GM12878 (cell line): ENCODE measurements at regions of chr11 and their contacts with region 1.

Region 1: GRCh38 chr11:59429924-59430516 is 3.8 kb upstream of the OR5A2 start:
- DNase-seq: peak; percentile 61
- ATAC-seq: peak; percentile 94
- H3K4me3 ChIP-seq: no peak overlapping the region
- H3K27ac ChIP-seq: no peak overlapping the region
- H3K4me1 ChIP-seq: no peaks in the 10 kb centered on the region
- H3K27me3 ChIP-seq: peaks cover 0 to 4% of the 10 kb centered on the region in 2 experiments; a peak in 1 of 4 replicates
- CTCF ChIP-seq: peak; percentile 70 to 82 (median 78)
- EP300 ChIP-seq: no peak
- POLR2A ChIP-seq: no peak
- RAD21 ChIP-seq: peak; percentile 92

Region 2: DNA sequence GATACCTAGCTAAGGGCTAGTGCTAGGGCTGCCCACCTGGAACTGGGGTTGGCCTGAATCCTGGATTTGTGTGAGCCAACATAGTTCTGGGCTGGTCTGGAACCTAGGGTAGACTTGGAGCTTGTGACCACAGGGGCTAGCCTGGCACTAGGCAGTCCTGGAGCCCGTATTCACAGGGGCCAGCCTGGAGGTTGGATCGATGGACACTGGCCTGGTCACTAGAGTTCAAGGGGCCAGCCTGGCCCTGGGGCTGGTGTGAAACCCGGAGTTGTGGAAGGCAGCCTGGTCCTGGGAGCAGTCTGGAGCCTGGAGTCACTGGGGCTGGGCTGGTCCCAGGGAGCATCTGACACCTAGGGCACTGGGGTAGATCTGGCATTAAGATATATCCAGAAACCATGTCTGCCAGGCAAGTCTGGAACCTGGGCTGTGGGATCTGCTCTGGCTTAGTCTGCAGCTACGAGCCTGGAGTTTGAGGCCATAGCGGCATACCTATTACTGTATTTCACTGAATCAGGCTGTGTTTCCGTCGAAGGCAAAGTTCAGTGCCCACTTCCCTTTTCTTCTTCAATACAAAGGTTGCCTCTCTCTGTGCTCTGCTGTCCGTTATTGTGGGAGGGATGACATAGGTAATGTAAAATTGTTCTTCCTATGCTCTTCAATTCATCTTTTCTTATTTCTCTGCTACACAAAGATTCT is 353.0 kb before region 1 on chr11:
- CTCF ChIA-PET with region 1: no interaction called
- POLR2A ChIA-PET with region 1: no interaction called
- RAD21 ChIA-PET with region 1: no interaction called
- SMC1A ChIA-PET with region 1: no interaction called
- in situ Hi-C with region 1: no loop called
- intact Hi-C with region 1: no loop called
- DNase-seq: no peak
- ATAC-seq: peak; percentile 97
- H3K4me3 ChIP-seq: no peak overlapping the region
- H3K27ac ChIP-seq: no peak overlapping the region
- H3K4me1 ChIP-seq: peaks cover 27% of the 10 kb centered on the region
- H3K27me3 ChIP-seq: no peaks in the 10 kb centered on the region
- CTCF ChIP-seq: no peak
- EP300 ChIP-seq: no peak
- POLR2A ChIP-seq: no peak
- RAD21 ChIP-seq: no peak

Region 3: GRCh38 chr11:59197991-59198390 is 232.0 kb before region 1 on chr11:
- CTCF ChIA-PET with region 1: interaction called, 6 read pairs
- POLR2A ChIA-PET with region 1: no interaction called
- RAD21 ChIA-PET with region 1: interaction called, 3 read pairs
- SMC1A ChIA-PET with region 1: interaction called, 3 read pairs
- in situ Hi-C with region 1: no loop called
- intact Hi-C with region 1: loop called (anchors 2 kb)
- DNase-seq: no peak
- ATAC-seq: no peak
- H3K4me3 ChIP-seq: no peak overlapping the region
- H3K27ac ChIP-seq: peak overlapping the region; percentile 94
- H3K4me1 ChIP-seq: peaks cover 35% of the 10 kb centered on the region
- H3K27me3 ChIP-seq: no peaks in the 10 kb centered on the region
- CTCF ChIP-seq: no peak
- EP300 ChIP-seq: no peak
- POLR2A ChIP-seq: no peak
- RAD21 ChIP-seq: no peak

Region 4: GRCh38 chr11:59207988-59208451 is 222.0 kb before region 1 on chr11:
- CTCF ChIA-PET with region 1: interaction called, 11 read pairs
- POLR2A ChIA-PET with region 1: no interaction called
- RAD21 ChIA-PET with region 1: no interaction called
- SMC1A ChIA-PET with region 1: interaction called, 16 read pairs
- in situ Hi-C with region 1: no loop called
- intact Hi-C with region 1: loop called (anchors 2 kb)
- DNase-seq: peak; percentile 89
- ATAC-seq: peak; percentile 77
- H3K4me3 ChIP-seq: peak overlapping the region; percentile 64
- H3K27ac ChIP-seq: peak overlapping the region; percentile 76
- H3K4me1 ChIP-seq: peaks cover 51% of the 10 kb centered on the region
- H3K27me3 ChIP-seq: no peaks in the 10 kb centered on the region
- CTCF ChIP-seq: peak; percentile 74 to 87 (median 78); a peak in 5 of 6 replicates
- EP300 ChIP-seq: peak; percentile 62 to 68; a peak in 3 of 4 replicates
- POLR2A ChIP-seq: no peak
- RAD21 ChIP-seq: peak; percentile 77

Region 5: DNA sequence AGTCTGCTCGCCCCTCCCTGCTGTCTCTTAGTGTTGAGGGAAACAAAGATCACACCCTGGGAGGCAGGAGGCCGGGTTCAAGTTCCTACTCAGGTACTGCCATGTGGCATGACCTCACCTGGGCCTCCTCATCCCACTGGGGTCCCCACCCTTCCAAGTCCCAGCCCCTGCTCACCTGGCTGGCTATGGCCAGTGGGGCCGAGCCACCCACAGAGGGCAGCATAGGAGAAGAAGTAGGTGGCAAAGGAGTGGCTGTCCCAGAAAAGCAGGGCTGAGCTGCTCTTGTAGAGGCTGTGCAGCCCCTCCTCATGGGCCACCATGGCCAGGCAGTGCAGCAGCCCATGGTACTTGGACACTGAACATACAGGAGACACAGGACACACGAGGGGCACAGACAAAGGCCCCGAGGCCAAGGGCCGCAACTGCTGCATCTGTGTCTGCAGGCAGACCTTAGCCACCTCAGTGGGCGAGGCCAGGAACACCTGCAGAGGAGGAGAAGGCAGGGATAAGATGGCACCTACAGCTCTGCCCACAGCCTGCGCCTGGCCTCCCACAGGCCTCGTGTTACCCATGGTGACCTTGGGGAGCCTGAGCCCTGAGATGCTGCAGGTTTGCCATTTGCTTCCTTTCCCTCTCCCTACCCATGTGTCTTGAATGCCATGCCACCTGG is 166.7 kb before region 1 on chr11:
- CTCF ChIA-PET with region 1: interaction called, 63 read pairs
- POLR2A ChIA-PET with region 1: no interaction called
- RAD21 ChIA-PET with region 1: interaction called, 10 read pairs
- SMC1A ChIA-PET with region 1: interaction called, 14 read pairs
- in situ Hi-C with region 1: no loop called
- intact Hi-C with region 1: loop called (anchors 1 kb)
- DNase-seq: no peak
- ATAC-seq: peak; percentile 53
- H3K4me3 ChIP-seq: no peak overlapping the region
- H3K27ac ChIP-seq: no peak overlapping the region
- H3K4me1 ChIP-seq: peaks cover 30% of the 10 kb centered on the region
- H3K27me3 ChIP-seq: no peaks in the 10 kb centered on the region
- CTCF ChIP-seq: peak; percentile 56 to 71 (median 58)
- EP300 ChIP-seq: no peak
- POLR2A ChIP-seq: no peak
- RAD21 ChIP-seq: peak; percentile 82

Region 6: DNA sequence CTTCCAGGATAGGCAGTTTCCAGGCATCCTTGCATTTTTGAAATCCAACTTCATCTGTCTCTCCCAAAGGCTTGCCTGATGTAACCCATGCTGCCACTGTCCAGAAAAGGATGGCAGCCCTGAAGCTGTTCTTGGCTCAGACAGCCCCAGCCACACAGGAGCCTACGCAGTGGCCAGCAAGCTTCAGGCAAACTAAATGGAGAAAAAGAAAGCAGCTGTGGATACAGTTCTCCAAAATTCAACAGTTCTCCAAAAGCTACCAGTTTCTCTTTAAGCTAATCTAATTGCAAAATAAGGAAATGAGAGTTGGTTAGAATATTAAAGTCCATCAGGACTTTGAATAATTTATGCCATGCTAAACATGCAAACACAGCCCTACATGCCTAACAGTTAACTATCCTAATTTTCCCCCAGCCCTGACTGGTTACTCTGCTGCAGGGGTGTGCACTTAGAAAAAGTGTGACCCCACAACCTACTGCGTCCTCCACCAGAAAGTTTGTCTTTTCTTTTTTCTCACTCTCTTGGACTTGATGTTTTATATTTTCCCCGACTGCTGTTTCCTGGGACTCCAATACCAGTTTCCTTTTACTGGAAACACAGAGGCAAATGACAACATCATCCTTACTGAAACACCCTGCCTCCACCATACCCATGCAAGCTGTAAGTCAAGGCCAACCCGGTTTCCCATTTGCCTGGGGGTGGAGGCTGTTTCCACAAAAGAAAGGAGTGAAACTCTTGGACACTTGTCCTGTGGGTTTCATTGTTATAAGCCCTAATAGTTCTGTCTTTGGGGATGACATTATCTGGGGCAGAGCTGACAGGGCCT is 140.5 kb before region 1 on chr11:
- CTCF ChIA-PET with region 1: interaction called, 8 read pairs
- POLR2A ChIA-PET with region 1: no interaction called
- RAD21 ChIA-PET with region 1: no interaction called
- SMC1A ChIA-PET with region 1: interaction called, 5 read pairs
- in situ Hi-C with region 1: loop called (anchors 5 kb)
- intact Hi-C with region 1: loop called (anchors 1 kb)
- DNase-seq: no peak
- ATAC-seq: no peak
- H3K4me3 ChIP-seq: no peak overlapping the region
- H3K27ac ChIP-seq: no peak overlapping the region
- H3K4me1 ChIP-seq: peaks cover 15% of the 10 kb centered on the region
- H3K27me3 ChIP-seq: no peaks in the 10 kb centered on the region
- CTCF ChIP-seq: no peak
- EP300 ChIP-seq: no peak
- POLR2A ChIP-seq: no peak
- RAD21 ChIP-seq: no peak

Region 7: DNA sequence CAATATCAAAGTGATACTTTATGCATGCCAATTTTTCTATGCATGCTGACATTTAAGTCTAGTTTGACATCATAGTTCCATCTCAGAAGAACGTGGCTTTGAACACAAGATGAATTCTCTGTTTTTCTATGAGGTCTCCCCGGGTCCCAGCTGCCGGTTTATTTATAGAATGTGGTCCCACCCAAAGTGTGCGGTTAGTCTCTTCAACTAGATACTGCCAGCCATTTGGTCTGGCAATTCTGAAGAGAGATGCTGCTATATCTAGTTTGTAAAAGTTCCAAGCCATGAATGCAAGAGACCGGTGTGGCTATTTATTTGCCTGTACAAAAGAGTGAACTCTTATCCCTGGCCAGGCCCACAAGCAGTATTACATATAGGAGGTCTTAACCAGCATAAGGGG is 13.0 kb before region 1 on chr11:
- CTCF ChIA-PET with region 1: interaction called, 16 read pairs
- POLR2A ChIA-PET with region 1: no interaction called
- RAD21 ChIA-PET with region 1: interaction called, 10 read pairs
- SMC1A ChIA-PET with region 1: interaction called, 4 read pairs
- in situ Hi-C with region 1: no loop called
- intact Hi-C with region 1: no loop called
- DNase-seq: no peak
- ATAC-seq: no peak
- H3K4me3 ChIP-seq: no peak overlapping the region
- H3K27ac ChIP-seq: no peak overlapping the region
- H3K4me1 ChIP-seq: no peaks in the 10 kb centered on the region
- H3K27me3 ChIP-seq: no peaks in the 10 kb centered on the region
- CTCF ChIP-seq: no peak
- EP300 ChIP-seq: no peak
- POLR2A ChIP-seq: no peak
- RAD21 ChIP-seq: no peak